ENCODE measurements at regions of chr9 and their contacts with region 1.

Region 1: GRCh38 chr9:13450723-13451122 is 171.2 kb upstream of the MPDZ start:
- DNase-seq: no peak
- ATAC-seq: no peak
- H3K4me3 ChIP-seq: no peak overlapping the region
- H3K27ac ChIP-seq: no peak overlapping the region
- H3K4me1 ChIP-seq: peaks cover 15% of the 10 kb centered on the region
- H3K27me3 ChIP-seq: no peaks in the 10 kb centered on the region
- CTCF ChIP-seq: no peak

Region 2: GRCh38 chr9:13557746-13558145 is 107.0 kb after region 1 on chr9:
- intact Hi-C with region 1: loop called in 1 of 2 experiments (anchors 10 kb)
- DNase-seq: no peak
- ATAC-seq: peak in 3 of 4 donors; percentile 40 to 63 (median 57)
- H3K4me3 ChIP-seq: no peak overlapping the region
- H3K27ac ChIP-seq: no peak overlapping the region
- H3K4me1 ChIP-seq: peaks cover 4% of the 10 kb centered on the region
- H3K27me3 ChIP-seq: no peaks in the 10 kb centered on the region
- CTCF ChIP-seq: no peak

Region 3: DNA sequence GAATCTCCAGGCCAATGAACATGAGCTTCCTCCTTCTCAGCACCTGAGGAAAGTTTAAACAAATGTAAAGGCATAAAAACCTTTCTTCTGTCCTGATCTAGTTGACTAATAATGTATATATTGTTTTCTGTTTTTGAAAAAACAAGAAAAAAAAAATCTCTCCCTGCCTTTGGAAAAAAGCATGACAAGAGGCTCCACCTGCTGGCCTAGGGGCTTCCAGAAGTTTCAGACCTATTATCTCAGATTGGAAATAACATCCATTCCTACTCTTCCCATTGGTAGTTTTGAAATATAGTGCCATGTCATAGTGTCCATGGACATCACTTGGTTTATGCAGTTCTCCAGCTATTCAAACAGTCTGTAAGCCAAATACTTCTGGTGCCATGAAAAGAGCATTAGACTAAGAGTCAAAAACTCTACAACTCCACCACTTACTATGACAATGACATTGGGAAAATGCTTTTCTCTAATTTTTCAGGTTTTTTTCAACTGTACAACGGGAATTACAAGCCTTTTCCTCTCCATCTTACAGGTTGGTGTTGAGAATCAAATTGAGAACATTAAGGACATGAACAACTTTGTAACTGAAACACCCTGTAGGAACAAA is 238.4 kb after region 1 on chr9:
- intact Hi-C with region 1: loop called in 1 of 2 experiments (anchors 10 kb)
- DNase-seq: no peak
- ATAC-seq: peak in 2 of 4 donors; percentile 44 to 52
- H3K4me3 ChIP-seq: no peak overlapping the region
- H3K27ac ChIP-seq: peak overlapping the region; percentile 74
- H3K4me1 ChIP-seq: peaks cover 37% of the 10 kb centered on the region
- H3K27me3 ChIP-seq: no peaks in the 10 kb centered on the region
- CTCF ChIP-seq: peak; percentile 54